Posterior cingulate gyrus (tissue), 11 donors: ENCODE measurements at regions of chr14 and their contacts with region 1.

Region 1: DNA sequence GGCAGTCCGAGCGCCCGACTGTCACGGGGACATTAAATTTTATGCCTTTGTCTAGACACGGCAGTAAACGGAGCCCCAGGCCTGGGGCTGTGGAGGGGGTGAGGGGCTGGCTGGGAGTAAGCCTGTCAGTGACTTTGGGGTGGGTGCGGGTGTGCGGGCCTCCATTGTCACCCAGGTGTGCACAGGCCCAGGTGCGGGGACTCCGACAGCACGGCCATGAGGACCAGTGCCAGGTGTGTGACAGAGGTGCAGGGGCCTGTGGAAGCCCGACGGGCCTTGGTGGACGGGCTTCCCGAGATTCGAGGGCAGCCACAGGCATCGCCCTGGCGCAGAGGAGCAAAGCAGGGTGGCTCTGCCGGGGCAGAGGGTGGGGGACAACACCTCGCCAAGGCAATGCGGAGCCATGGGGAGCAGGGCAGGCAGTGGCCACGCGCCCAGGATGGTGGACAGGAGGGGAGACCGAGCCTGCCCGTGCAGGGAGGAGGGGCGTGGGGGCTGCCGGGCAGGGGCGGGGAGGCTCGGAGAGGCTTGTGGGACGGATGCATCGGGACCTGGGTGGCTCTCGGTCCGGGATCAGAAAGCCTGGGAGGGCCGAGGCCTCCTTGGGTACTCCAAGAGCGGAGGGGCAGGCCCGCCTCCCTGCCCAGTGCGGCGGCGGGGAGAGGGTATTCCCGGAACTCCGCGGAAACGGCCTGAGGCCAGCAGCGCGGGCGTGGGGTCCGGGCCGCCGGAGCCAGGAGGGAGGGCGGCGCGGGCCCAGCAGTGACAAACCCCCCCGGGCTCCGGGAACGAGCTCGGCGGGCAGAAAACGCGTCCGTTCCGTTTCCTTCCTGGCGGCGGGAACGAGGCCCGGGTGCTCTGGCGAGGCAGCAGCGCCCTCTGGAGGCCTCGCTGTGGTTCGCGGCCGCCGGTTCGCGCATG is 1.5 kb downstream of the TMEM121 start:
- DNase-seq: peak; percentile 69 to 97 (median 82)

Region 2: DNA sequence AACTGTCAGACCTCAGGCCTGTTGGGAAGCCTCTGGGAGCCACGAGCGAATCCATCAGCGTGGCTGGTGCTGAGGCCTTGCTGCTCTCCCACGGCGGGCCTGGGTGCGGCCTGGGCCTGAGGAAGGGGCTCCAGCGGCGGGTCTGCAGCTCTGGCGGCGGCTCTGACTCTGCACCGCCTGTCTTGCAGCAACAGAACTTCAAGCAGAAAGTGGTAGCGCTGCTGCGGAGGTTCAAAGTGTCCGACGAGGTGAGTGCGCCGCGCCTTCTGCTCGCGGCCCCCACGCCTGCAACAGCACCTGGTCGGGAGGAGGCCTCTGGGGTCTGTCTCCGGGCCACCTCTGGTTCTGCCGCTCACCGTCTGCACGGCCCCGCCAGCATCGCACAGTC is 158.3 kb before region 1 on chr14:
- intact Hi-C with region 1: loop called (anchors 1 kb)
- DNase-seq: no peak

Region 3: GRCh38 chr14:105480952-105481801 is 46.7 kb before region 1 on chr14:
- intact Hi-C with region 1: loop called (anchors 1 kb)
- DNase-seq: peak; percentile 79 to 98 (median 90)

Region 4: GRCh38 chr14:105490572-105491366 is 37.2 kb before region 1 on chr14 and contains the start of gene TEDC1:
- intact Hi-C with region 1: loop called (anchors 1 kb)
- DNase-seq: peak; percentile 99 to 100 (median 100)

Region 5: GRCh38 chr14:105627711-105628110 is 99.8 kb after region 1 on chr14:
- intact Hi-C with region 1: no loop called
- DNase-seq: peak in 3 of 10 donors; percentile 32 to 45 (median 37)

Region 6: GRCh38 chr14:105666420-105666819 is 138.5 kb after region 1 on chr14:
- intact Hi-C with region 1: no loop called
- DNase-seq: peak in 2 of 10 donors; percentile 27 to 69